Activated CD4-positive, alpha-beta memory T cell treated with anti-CD3 and anti-CD28 coated beads, Interleukin-2, amount 10 ng/mL, durations not matched to agents 7 days and 5 days (primary cell): ENCODE measurements at regions of chr19 and their contacts with region 1.

Region 1: GRCh38 chr19:41263850-41264580 is at the start of gene HNRNPUL1:
- DNase-seq: peak; percentile 99
- H3K4me3 Mint-ChIP-seq: peak within 1 kb of the TSS; percentile 91
- H3K27ac Mint-ChIP-seq: peak within 1 kb of the TSS; percentile 99
- H3K4me1 Mint-ChIP-seq: peaks cover 45% of the 10 kb centered on the region
- H3K27me3 Mint-ChIP-seq: no peaks in the 10 kb centered on the region
- total RNA-seq, gene HNRNPUL1: 373 to 398 TPM

Region 2: GRCh38 chr19:41089955-41090354 is 174.1 kb before region 1 on chr19:
- CTCF ChIA-PET with region 1: no interaction called
- POLR2A ChIA-PET with region 1: no interaction called
- DNase-seq: no peak
- H3K4me3 Mint-ChIP-seq: no peak overlapping the region
- H3K27ac Mint-ChIP-seq: no peak overlapping the region
- H3K4me1 Mint-ChIP-seq: no peaks in the 10 kb centered on the region
- H3K27me3 Mint-ChIP-seq: peaks cover 70% of the 10 kb centered on the region

Region 3: GRCh38 chr19:41206926-41207750 is 56.9 kb before region 1 on chr19:
- CTCF ChIA-PET with region 1: interaction called, 74 read pairs
- POLR2A ChIA-PET with region 1: interaction called, 8 read pairs
- DNase-seq: no peak
- H3K4me3 Mint-ChIP-seq: no peak overlapping the region
- H3K27ac Mint-ChIP-seq: no peak overlapping the region
- H3K4me1 Mint-ChIP-seq: peaks cover 10% of the 10 kb centered on the region
- H3K27me3 Mint-ChIP-seq: peaks cover 2% of the 10 kb centered on the region

Region 4: DNA sequence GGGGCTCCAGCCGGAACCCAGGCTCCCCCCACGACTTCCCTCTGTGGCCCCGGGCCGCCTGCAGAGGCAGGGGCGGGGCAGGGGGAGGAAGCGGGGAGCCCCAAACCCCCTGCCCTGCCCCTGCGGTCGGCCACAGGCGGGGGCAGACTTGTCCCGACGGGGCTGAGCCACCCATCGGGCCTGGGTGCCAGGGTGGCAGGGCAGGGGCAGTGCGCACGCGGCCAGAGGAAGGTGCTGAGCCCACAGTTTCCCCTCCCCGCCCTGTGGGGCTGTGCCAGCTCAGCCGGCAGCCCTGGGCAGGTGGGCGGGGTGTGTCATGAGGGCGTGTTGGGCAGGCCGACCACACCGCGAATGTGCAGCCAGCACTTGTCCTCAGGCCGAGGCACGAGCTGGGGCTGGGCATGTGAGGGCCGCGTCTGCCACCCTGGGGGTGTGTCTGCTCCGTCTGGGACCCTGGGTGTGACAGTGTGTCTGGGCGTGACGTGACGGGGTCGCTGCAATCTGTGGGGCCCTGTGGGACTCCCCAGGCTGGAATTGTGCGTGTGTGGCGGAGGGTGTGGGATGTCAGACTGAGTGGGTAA is 63.7 kb after region 1 on chr19:
- CTCF ChIA-PET with region 1: interaction called, 7 read pairs
- POLR2A ChIA-PET with region 1: interaction called, 28 read pairs
- DNase-seq: peak; percentile 89
- H3K4me3 Mint-ChIP-seq: peak overlapping the region; percentile 68
- H3K27ac Mint-ChIP-seq: peak overlapping the region; percentile 95
- H3K4me1 Mint-ChIP-seq: peaks cover 73% of the 10 kb centered on the region
- H3K27me3 Mint-ChIP-seq: no peaks in the 10 kb centered on the region

Region 5: GRCh38 chr19:41363753-41364523 is 99.9 kb after region 1 on chr19 and contains the start of gene B9D2:
- CTCF ChIA-PET with region 1: interaction called, 6 read pairs
- POLR2A ChIA-PET with region 1: interaction called, 24 read pairs
- DNase-seq: peak; percentile 98
- H3K4me3 Mint-ChIP-seq: peak within 1 kb of the TSS; percentile 87
- H3K27ac Mint-ChIP-seq: peak within 1 kb of the TSS; percentile 93
- H3K4me1 Mint-ChIP-seq: peaks cover 40% of the 10 kb centered on the region
- H3K27me3 Mint-ChIP-seq: no peaks in the 10 kb centered on the region
- total RNA-seq, gene B9D2: 10.8 to 11.2 TPM

Region 6: GRCh38 chr19:41548954-41549688 is 285.1 kb after region 1 on chr19:
- CTCF ChIA-PET with region 1: no interaction called
- POLR2A ChIA-PET with region 1: interaction called, 16 read pairs
- DNase-seq: peak; percentile 88
- H3K4me3 Mint-ChIP-seq: peak overlapping the region; percentile 99
- H3K27ac Mint-ChIP-seq: peak overlapping the region; percentile 99
- H3K4me1 Mint-ChIP-seq: peaks cover 62% of the 10 kb centered on the region
- H3K27me3 Mint-ChIP-seq: no peaks in the 10 kb centered on the region